Head of caudate nucleus (tissue), 42 donors: ENCODE measurements at regions of chr2 and their contacts with region 1.

Region 1: DNA sequence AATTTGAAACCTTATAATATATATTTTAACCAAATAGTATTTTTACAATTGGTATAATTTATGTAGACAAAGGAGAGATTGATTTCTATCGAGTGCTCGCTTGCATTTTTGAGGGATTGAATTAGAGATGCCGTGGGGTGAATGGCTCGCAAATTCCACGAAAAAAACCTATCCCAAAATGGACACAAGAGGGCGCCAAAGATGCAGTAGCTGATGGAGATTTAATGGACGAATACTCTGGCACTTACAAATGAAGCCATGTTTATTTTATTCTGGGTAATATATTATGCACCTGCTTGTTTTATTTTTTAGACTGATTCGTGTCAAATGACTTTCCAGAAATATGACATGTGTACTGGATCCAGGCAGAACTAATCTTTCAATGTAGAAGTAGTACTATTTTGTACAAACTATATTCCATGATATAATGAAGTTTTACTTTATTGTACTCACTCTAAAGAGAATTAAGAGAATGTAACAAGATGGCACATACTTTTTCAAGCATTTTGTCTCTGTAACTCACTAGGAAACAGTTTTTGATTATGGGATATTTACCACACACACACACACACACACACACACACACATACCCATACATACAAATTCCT is 505.4 kb downstream of the PLCL1 start:
- DNase-seq: peak in 35 of 42 donors; percentile 29 to 85 (median 61)

Region 2: DNA sequence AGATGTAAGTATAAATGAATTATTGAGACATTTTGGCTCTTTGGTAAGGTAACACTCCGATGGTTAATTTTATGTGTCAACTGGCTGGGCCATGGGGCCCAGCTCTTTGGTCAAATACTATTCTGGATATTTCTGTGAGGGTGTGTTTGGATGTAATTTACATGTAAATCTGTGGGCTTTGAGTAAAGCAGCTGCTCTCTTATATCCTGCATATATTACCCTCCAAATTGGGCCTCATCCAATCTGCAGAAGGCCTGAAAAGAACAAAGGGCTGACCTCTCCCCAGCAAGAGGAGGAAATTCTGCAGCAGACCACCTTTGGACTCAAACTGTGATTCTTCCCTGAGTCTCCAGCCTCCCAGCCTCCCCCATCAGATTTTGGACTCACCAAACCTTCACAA is 41.3 kb before region 1 on chr2:
- intact Hi-C with region 1: no loop called
- DNase-seq: no peak

Region 3: GRCh38 chr2:199459286-199460016 is 1149.7 kb after region 1 on chr2:
- intact Hi-C with region 1: loop called (anchors 10 kb)
- DNase-seq: peak; percentile 88 to 99 (median 96)

Region 4: DNA sequence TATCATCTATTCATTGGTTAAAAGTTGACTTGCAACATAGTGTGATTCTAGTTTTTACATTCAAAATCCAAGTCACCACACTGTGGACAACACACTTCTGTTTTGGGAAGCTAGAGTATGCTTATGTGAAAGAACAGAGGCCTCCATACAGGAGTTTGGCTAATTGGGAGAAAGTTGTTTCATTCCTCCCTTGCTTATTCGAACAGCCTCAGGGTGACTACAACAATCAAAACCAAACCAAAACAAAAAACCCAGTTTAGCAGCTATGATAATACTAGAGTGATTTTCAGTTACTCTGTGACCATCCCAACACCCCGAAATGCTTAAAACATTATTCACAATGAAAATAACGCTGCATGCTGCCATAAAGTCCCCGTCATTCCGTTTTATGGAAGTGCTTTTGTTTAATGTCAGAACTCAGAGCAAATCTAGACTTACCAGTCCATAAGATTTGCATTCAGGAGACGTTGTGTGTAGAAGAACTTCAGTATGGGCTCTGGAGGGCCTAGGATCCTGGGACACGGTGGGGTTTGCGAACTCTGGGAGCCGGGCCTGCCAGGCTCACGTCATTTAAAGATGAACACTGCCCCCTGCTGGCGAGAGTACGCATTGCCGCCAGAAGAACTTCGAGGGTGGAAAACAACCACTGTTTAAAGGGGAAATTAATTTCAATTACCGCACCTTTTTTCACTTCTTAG is 1429.8 kb after region 1 on chr2:
- intact Hi-C with region 1: loop called (anchors 10 kb)
- DNase-seq: peak; percentile 46 to 94 (median 84)